ENCODE measurements at regions of chr2 and their contacts with region 1.

Region 1: DNA sequence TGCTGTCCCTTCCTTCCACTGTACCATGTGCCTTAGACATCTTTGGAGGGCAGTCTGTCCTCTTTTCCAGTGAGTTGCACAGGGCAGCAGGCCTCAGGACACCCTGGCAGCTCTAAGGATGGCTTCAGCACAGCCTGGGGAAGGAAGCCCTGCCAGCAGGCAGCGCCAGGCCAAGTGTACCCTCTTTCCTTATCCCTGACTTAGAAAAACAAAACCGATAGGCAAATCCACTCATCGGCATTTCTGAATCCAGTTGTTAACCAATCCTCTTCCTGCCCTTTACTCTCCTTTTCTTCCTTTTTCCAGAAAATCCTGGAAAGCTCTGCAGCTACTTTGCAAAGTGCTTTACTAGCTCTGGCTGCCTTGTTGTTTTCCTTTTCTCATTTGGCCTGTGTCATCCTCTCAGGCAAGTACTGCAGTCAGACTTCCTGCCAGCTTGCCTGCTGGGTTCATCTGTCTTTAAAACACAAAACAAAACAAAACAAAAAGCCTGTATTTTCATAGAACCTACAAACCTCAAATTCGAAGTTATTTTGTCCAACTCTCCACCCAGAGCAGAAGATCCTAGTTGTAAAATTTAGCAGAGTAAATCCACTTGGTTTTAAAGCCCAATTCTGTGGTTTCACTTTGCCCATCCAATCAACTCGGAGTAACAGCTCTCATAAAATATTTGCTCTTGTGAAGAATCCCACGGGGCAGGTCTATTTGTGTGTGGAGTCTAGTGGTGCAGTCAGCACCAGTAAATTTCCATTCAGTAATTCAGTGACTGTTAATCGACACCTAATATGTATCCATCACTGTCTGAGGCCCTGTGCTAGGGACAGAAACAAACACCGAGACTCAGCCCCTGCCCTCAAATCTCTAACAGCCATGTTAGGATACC is 45.2 kb downstream of the PCBP1 start:
- DNase-seq: peak in 2 of 3 donors; percentile 83 to 88
- H3K4me3 ChIP-seq: peak overlapping the region in 6 of 7 experiments; percentile 17 to 65 (median 44)
- H3K27ac ChIP-seq: peak overlapping the region; percentile 52 to 90
- H3K4me1 ChIP-seq: peaks cover 45 to 84% (median 72%) of the 10 kb centered on the region in 4 experiments
- H3K27me3 ChIP-seq: no peaks in the 10 kb centered on the region

Region 2: GRCh38 chr2:70104231-70105111 is 28.0 kb before region 1 on chr2:
- CTCF ChIA-PET with region 1: interaction called, 16 read pairs
- POLR2A ChIA-PET with region 1: no interaction called
- DNase-seq: peak; percentile 72 to 81 (median 76)
- H3K4me3 ChIP-seq: peak overlapping the region in 5 of 7 experiments; percentile 32 to 49 (median 46)
- H3K27ac ChIP-seq: peak overlapping the region; percentile 46 to 76
- H3K4me1 ChIP-seq: peaks cover 21 to 45% (median 33%) of the 10 kb centered on the region in 4 experiments
- H3K27me3 ChIP-seq: no peaks in the 10 kb centered on the region

Region 3: GRCh38 chr2:70142590-70143313 is 10.3 kb after region 1 on chr2:
- CTCF ChIA-PET with region 1: interaction called, 12 read pairs
- POLR2A ChIA-PET with region 1: interaction called, 5 read pairs
- DNase-seq: peak; percentile 99 to 100 (median 99)
- H3K4me3 ChIP-seq: peak overlapping the region in 6 of 7 experiments; percentile 49 to 79 (median 68)
- H3K27ac ChIP-seq: peak overlapping the region; percentile 85 to 97
- H3K4me1 ChIP-seq: peaks cover 10 to 41% (median 26%) of the 10 kb centered on the region in 4 experiments
- H3K27me3 ChIP-seq: no peaks in the 10 kb centered on the region